PC-9 (cell line): ENCODE measurements at regions of chr1 and their contacts with region 1.

Region 1: DNA sequence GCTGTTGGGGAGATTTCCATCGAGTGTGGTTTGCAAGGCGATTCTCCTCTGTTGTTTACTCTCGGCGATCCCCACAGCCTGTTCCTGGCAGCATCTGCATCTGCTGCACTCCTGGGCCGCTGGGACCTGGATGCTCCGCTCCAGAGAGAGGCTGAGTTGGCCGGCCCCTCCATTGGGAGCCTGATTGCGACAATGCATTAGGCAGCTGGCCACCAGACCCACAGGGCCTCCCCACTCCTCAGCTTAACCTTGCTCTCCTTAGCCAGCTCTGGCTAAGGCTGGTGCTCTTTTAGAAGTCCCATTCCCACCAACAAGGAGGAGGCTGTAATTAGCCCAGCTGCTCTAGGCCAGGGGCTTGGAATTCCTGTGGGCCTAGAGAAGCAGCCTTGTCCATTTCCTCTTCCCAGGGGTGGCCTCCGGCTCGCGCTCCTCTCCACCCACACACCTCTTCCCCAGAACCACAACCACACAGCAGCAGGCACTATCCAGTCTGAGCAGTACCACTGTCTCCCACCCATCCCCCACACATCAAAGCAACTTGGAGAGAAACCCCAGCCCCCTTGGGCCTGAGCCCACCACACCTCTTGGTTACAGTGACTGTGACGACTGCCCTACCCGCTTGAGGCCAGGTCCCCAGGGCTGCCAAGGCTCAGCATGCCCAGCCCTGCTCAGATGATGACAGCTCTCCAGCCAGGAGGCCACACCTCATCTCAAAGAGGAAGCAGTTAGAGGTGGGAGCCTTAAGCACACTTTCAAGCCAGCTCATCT is 193.8 kb upstream of the EDN2 start:
- DNase-seq: no peak
- H3K4me3 ChIP-seq: no peak overlapping the region
- H3K27ac ChIP-seq: no peak overlapping the region
- H3K4me1 ChIP-seq: peaks cover 13% of the 10 kb centered on the region
- H3K27me3 ChIP-seq: no peaks in the 10 kb centered on the region
- CTCF ChIP-seq: no peak

Region 2: GRCh38 chr1:41573785-41574713 is 104.2 kb before region 1 on chr1:
- CTCF ChIA-PET with region 1: no interaction called
- POLR2A ChIA-PET with region 1: no interaction called
- intact Hi-C with region 1: no loop called
- DNase-seq: peak; percentile 58 to 80
- H3K4me3 ChIP-seq: no peak overlapping the region
- H3K27ac ChIP-seq: no peak overlapping the region
- H3K4me1 ChIP-seq: peaks cover 5% of the 10 kb centered on the region
- H3K27me3 ChIP-seq: no peaks in the 10 kb centered on the region
- CTCF ChIP-seq: peak; percentile 93

Region 3: DNA sequence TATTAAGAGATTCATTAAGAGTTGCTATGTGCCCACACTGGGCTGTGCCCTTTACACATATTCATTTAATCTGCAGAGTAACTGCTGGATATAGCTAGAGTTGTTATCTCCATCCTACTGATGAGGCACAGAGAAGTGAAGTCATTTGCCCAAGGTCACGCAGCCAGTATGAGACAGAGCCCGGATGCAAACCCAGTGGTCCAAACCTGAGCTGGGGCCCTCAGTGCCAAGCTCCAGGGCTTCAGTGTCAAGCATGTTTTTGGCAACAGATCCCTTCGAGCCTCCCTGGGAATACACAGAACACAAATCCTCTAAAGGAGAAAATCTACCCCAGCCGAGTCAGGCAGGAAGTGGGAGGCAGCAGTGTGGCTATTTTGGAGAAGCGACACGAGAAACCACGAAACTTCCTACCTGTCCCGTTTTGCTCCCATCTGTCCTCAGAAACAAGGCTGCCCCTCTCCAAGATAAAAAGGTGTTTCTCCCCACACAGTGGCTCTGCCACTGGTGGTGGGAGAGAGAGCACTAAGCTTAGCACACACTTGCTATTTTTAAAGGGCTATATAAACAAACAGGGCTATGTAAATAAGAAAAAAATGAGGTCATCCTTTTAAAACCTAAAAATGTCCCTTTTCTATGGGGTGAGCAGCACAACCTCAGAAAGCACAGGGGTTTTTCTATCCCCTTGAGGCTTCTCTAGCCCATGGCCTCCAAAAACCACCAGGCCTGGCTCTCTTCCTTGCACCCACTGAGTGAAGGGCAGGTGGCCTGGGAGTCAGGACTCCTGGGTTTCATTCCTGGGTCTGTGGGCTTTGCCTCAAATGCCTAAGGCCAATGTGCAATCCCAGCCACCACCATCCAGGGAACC is 55.2 kb before region 1 on chr1:
- CTCF ChIA-PET with region 1: no interaction called
- POLR2A ChIA-PET with region 1: no interaction called
- intact Hi-C with region 1: no loop called
- DNase-seq: no peak
- H3K4me3 ChIP-seq: no peak overlapping the region
- H3K27ac ChIP-seq: no peak overlapping the region
- H3K4me1 ChIP-seq: peaks cover 26% of the 10 kb centered on the region
- H3K27me3 ChIP-seq: no peaks in the 10 kb centered on the region
- CTCF ChIP-seq: no peak

Region 4: DNA sequence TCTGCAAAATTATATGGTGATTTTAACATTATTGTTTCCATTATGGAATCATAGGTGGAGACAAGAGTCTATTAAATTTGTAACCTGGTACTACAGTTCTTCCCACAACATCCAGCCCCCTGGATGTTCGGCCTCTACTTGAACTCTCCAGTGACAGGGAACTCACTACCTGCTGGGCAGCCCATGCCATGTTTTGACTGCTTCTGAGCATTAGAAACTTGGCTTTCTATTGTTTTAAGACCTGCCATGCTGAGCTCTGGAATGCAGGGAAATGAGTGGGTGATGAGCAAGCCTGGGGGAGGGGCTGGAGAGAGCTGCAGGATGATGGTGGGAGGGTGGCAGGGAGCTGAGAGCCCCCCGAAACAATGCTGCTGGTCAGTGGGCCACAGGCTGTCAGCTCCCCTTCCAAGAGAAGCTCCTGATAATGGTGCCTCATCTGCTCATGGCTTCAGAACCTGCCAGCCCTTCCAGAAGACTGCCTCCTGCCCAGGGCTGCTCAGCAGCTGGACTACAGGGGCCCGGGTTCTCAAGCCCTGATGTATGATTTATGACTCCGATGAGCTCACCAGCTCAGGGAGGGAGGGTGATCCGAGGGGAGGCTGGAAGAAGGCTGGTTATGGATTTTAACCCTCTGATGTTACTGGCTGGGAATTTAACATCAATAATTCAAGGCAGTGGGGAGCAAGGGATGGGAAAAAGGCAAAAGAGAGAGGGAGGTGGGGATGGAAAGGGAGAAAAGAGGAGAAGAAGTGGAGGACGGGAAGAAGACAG is 35.4 kb after region 1 on chr1:
- CTCF ChIA-PET with region 1: no interaction called
- POLR2A ChIA-PET with region 1: interaction called, 10 read pairs
- intact Hi-C with region 1: no loop called
- DNase-seq: peak; percentile 27 to 38
- H3K4me3 ChIP-seq: no peak overlapping the region
- H3K27ac ChIP-seq: no peak overlapping the region
- H3K4me1 ChIP-seq: peaks cover 18% of the 10 kb centered on the region
- H3K27me3 ChIP-seq: no peaks in the 10 kb centered on the region
- CTCF ChIP-seq: no peak

Region 5: DNA sequence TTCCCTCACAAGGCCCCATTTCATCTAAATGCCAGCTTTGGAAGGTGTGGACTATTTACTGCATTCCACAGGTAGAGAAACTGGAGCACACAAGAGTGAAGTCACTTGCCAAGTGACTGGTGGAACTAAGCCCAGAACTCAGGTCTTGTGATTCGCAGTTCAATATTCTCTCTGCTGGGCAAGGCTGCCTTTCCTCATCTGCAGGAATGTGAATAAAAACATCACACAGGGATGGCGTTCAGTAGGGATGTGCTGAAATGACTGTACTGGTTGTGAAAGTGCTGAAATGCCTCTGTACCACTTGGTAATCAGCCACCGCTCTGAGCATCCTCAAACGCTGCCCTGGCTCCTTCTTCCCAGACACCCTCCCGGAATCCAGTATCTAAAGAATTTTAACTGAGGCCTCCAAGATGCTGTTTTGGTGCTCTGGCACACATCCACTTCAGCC is 94.9 kb after region 1 on chr1:
- CTCF ChIA-PET with region 1: no interaction called
- POLR2A ChIA-PET with region 1: no interaction called
- intact Hi-C with region 1: loop called (anchors 5 kb)
- DNase-seq: peak; percentile 22 to 87
- H3K4me3 ChIP-seq: no peak overlapping the region
- H3K27ac ChIP-seq: no peak overlapping the region
- H3K4me1 ChIP-seq: peaks cover 10% of the 10 kb centered on the region; the same call in 1 of the 2 replicates
- H3K27me3 ChIP-seq: no peaks in the 10 kb centered on the region
- CTCF ChIP-seq: no peak